Lower leg skin (tissue), 4 donors: ENCODE measurements at regions of chr2 and their contacts with region 1.

Region 1: DNA sequence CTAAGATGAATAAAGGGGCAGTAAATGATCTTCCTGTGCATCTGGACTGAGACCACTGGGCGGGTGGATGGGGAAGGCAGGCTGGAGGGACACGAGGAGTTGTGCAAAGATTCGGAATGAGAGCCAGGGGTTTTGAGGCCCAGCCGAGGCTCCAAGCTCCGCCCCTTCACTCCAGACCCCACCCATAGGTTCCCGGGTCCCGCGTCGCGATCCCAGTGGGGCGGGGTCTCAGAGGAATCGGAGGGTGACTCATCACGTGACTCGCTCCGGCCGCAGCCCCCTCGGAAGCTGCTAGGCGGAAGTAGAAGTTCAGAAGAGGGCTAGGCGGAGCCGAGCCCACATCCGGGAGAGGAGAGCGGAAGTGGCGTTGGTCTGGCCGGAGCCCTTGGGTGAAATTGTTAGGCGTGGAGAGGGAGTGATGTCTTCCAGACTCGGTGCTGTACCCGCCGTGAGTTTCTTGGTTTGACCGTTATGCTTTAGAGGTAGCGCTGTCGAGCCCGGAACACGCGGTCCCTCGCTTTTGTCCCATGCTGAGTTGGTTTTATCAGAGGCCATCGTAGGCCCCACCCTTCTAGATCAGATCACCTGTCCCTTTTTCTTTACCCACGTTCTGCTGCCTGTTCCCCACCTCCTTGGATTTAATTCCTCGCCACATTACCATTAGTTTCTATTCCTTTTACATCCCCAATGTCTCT is at the start of gene ZNF512:
- DNase-seq: peak; percentile 86 to 98
- H3K4me3 ChIP-seq: peak within 1 kb of the TSS; percentile 75
- CTCF ChIP-seq: no peak
- POLR2A ChIP-seq: no peak
- total RNA-seq, gene ZNF512: 3.5 to 17.6 (median 12.6) TPM

Region 2: GRCh38 chr2:29412197-29412925 is 1829.5 kb after region 1 on chr2:
- intact Hi-C with region 1: loop called (anchors 5 kb)
- DNase-seq: no peak
- H3K4me3 ChIP-seq: no peak overlapping the region
- CTCF ChIP-seq: no peak
- POLR2A ChIP-seq: no peak